ENCODE measurements at regions of chr12 and their contacts with region 1.

Region 1: DNA sequence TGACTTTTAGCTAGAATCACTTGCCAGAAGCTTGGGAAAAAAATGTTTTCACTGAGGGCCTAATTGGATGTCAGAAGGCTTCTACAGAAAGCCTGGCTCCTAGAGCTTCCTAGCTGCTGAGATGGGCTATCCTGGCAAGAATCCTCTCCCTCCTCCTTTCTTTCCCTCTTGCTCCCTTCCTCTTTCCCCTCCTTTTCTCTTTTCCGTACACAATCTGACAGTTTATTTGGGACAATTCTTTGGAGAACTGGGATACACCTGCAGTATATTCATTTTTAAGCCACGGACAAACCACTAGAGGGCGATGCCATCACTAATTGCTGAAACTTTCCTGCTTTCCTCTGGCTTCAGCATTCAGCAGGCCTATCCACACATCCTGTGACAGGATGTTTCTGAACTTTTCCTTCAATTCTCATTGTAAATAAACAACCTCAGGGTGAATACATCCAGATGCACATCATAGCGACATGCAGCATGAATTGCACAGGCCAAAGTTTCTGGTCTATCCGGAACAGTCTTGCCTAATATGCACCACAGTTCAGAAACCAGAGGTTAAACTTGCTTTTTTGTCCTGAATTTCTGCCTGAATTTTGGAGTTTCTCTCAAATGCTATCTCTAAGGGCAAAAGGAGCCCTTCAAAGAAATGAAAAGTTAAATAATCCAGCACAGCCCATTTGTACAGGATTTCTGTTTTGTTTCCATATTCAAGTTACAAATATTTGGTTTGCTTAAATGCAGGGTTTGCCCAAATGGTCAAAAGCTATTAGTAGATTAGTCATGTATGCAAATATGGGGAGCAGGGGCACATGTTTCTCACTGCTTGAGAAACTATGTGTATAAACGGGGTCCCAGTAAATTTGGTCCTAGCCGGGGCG is 142.8 kb downstream of the PAWR start:
- DNase-seq: peak; percentile 79
- H3K4me3 Mint-ChIP-seq: peak overlapping the region; percentile 51
- H3K27ac Mint-ChIP-seq: peak overlapping the region; percentile 44
- H3K4me1 Mint-ChIP-seq: peaks cover 66% of the 10 kb centered on the region
- H3K27me3 Mint-ChIP-seq: no peaks in the 10 kb centered on the region
- CTCF ChIP-seq: peak; percentile 63

Region 2: DNA sequence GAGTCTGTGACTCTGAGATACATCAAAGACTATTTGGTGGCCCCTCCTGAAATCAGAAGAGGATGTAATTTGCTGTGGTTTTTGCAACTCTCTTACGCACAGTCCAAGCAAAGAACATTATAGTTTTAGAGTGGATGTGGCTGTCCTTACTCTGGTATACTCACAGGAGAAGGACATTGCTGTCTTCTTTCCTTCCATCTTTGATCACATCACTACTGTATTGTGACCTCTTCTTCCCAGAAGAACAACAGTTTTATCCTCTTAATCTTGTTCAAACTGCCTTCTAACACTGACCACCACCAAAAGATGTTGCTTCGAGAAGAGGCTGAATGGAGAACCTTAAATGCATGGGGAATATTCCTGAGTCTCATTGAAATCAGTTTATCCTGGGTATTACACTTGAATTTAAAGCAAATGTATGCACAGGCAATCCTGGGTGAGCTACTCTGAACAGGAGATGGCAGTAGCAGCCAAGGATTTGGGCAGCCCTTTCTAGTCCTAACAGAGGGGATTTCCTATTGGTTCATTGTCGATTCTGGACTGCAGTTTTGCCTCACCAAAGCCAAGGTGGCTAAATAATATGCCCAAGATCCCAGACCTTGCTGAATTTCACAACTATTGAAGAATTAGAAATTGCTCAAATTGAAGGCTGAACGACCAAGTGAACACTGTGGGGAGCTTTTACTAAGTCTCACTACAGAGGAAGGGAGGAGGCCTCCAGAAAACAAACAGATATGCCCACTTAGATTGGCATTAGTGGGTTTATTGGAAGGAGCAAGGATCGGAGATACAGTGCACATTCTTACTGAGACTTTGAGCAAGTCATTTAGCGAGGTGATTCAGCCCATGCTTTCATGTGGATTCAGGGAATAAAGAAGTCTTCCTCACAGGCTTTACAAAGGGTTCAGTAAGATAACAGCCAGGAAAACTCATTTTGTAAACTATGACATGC is 140.0 kb before region 1 on chr12:
- CTCF ChIA-PET with region 1: interaction called, 4 read pairs
- POLR2A ChIA-PET with region 1: interaction called, 4 read pairs
- intact Hi-C with region 1: loop called (anchors 5 kb)
- DNase-seq: peak; percentile 89
- H3K4me3 Mint-ChIP-seq: no peak overlapping the region
- H3K27ac Mint-ChIP-seq: peak overlapping the region; percentile 54
- H3K4me1 Mint-ChIP-seq: peaks cover 13% of the 10 kb centered on the region
- H3K27me3 Mint-ChIP-seq: no peaks in the 10 kb centered on the region
- CTCF ChIP-seq: peak; percentile 75

Region 3: DNA sequence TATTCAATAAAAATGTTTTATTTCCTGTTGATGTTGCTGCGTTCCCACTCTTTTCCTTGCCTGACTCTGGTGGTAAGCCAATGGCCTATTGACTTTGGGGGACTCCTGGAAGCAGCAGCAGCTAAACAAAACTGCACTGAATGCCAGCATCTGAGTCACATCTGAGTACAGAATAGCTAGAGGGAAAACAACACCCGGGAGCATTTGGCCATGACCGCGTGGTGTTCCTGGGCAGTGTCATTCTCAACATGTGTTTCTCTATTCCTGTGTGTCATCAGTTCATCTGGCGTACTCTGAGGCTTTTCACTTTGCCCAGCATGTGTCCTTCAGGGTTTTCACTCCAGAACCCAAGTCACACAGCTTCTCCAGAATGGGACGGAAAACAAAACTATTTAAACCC is 96.0 kb before region 1 on chr12:
- CTCF ChIA-PET with region 1: interaction called, 5 read pairs
- POLR2A ChIA-PET with region 1: interaction called, 11 read pairs
- intact Hi-C with region 1: no loop called
- DNase-seq: peak; percentile 94
- H3K4me3 Mint-ChIP-seq: peak overlapping the region; percentile 60
- H3K27ac Mint-ChIP-seq: peak overlapping the region; percentile 94
- H3K4me1 Mint-ChIP-seq: peaks cover 38% of the 10 kb centered on the region
- H3K27me3 Mint-ChIP-seq: no peaks in the 10 kb centered on the region
- CTCF ChIP-seq: no peak

Region 4: GRCh38 chr12:79597910-79598309 is 49.9 kb after region 1 on chr12:
- CTCF ChIA-PET with region 1: no interaction called
- POLR2A ChIA-PET with region 1: no interaction called
- intact Hi-C with region 1: no loop called
- DNase-seq: no peak
- H3K4me3 Mint-ChIP-seq: no peak overlapping the region
- H3K27ac Mint-ChIP-seq: peak overlapping the region; percentile 23
- H3K4me1 Mint-ChIP-seq: peaks cover 13% of the 10 kb centered on the region
- H3K27me3 Mint-ChIP-seq: no peaks in the 10 kb centered on the region
- CTCF ChIP-seq: no peak

Region 5: DNA sequence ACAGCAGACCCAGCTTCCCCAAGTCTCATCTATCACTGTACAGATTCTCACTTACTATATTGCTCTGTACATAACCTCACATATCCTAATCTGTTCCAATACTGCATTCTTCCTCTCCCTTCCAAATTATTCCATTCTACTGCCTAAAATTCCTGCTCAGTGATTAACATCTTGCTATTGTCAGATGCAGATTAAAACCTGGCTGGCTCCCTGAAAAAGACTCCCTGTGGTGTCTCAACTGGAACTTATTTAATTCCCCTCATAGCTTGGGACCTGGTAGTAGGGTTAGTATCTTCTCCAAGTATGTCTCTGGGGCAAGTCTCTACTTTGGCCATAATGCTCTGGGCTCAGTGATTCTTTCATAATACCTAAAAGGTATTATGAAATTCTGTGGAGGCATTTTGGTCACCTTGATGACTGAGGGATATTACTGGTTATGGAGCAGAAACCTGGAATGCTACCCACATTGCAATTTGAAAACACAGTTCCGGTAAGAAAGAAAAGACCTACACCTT is 87.0 kb after region 1 on chr12:
- CTCF ChIA-PET with region 1: no interaction called
- POLR2A ChIA-PET with region 1: interaction called, 4 read pairs
- intact Hi-C with region 1: loop called (anchors 1 kb)
- DNase-seq: peak; percentile 73
- H3K4me3 Mint-ChIP-seq: peak overlapping the region; percentile 52
- H3K27ac Mint-ChIP-seq: peak overlapping the region; percentile 75
- H3K4me1 Mint-ChIP-seq: peaks cover 28% of the 10 kb centered on the region
- H3K27me3 Mint-ChIP-seq: no peaks in the 10 kb centered on the region
- CTCF ChIP-seq: no peak

Region 6: DNA sequence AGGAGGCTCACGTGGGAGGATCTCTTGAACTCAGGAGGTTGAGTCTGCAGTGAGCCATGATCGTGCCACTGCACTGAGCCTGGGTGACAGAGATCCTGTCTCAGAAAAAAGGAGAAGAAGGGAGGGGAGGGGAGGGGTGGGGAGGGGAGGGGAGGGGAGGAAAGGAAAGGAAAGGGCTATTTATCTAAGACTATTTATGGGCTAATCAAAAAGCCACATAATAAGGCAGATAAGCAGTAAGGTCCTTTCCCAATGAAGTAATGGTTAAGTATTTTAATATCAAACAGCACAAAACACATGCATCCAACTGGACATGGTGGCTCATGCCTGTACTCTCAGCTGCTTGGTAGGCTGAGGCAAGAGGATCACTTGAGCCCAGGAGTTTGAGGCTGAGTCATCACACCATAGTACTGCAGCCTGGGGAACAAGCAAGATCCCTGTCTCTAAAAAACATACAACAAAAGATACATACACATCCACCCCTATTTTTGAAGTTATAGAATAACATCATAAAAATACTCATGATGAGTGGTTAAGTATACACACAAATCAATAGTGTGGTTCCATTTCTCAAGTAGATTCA is 133.1 kb after region 1 on chr12:
- CTCF ChIA-PET with region 1: interaction called, 15 read pairs
- POLR2A ChIA-PET with region 1: interaction called, 12 read pairs
- intact Hi-C with region 1: no loop called
- DNase-seq: peak; percentile 74
- H3K4me3 Mint-ChIP-seq: no peak overlapping the region
- H3K27ac Mint-ChIP-seq: peak overlapping the region; percentile 65
- H3K4me1 Mint-ChIP-seq: peaks cover 59% of the 10 kb centered on the region
- H3K27me3 Mint-ChIP-seq: no peaks in the 10 kb centered on the region
- CTCF ChIP-seq: no peak

Region 7: GRCh38 chr12:79737875-79738718 is 190.1 kb after region 1 on chr12:
- CTCF ChIA-PET with region 1: interaction called, 11 read pairs
- POLR2A ChIA-PET with region 1: interaction called, 6 read pairs
- intact Hi-C with region 1: loop called (anchors 2 kb)
- DNase-seq: peak; percentile 80
- H3K4me3 Mint-ChIP-seq: no peak overlapping the region
- H3K27ac Mint-ChIP-seq: no peak overlapping the region
- H3K4me1 Mint-ChIP-seq: no peaks in the 10 kb centered on the region
- H3K27me3 Mint-ChIP-seq: no peaks in the 10 kb centered on the region
- CTCF ChIP-seq: peak; percentile 62

Region 8: GRCh38 chr12:79982091-79983062 is 434.4 kb after region 1 on chr12:
- CTCF ChIA-PET with region 1: no interaction called
- POLR2A ChIA-PET with region 1: no interaction called
- intact Hi-C with region 1: no loop called
- DNase-seq: no peak
- H3K4me3 Mint-ChIP-seq: no peak overlapping the region
- H3K27ac Mint-ChIP-seq: peak overlapping the region; percentile 31
- H3K4me1 Mint-ChIP-seq: peaks cover 19% of the 10 kb centered on the region
- H3K27me3 Mint-ChIP-seq: no peaks in the 10 kb centered on the region
- CTCF ChIP-seq: no peak

Measured in MCF 10A (cell line).